IMR-90 (cell line): ENCODE measurements at regions of chr2 and their contacts with region 1.

Region 1: GRCh38 chr2:69933839-69934613 is 19.1 kb downstream of the MXD1 start:
- DNase-seq: peak; percentile 93
- ATAC-seq: peak; percentile 87
- H3K4me3 ChIP-seq: peak overlapping the region; percentile 8; the same call in 1 of the 2 replicates
- H3K27ac ChIP-seq: peak overlapping the region; percentile 74
- H3K4me1 ChIP-seq: peaks cover 11% of the 10 kb centered on the region
- H3K27me3 ChIP-seq: no peaks in the 10 kb centered on the region
- CTCF ChIP-seq: no peak
- POLR2A ChIP-seq: peak; percentile 72; the same call in 1 of the 2 replicates
- RAD21 ChIP-seq: no peak

Region 2: DNA sequence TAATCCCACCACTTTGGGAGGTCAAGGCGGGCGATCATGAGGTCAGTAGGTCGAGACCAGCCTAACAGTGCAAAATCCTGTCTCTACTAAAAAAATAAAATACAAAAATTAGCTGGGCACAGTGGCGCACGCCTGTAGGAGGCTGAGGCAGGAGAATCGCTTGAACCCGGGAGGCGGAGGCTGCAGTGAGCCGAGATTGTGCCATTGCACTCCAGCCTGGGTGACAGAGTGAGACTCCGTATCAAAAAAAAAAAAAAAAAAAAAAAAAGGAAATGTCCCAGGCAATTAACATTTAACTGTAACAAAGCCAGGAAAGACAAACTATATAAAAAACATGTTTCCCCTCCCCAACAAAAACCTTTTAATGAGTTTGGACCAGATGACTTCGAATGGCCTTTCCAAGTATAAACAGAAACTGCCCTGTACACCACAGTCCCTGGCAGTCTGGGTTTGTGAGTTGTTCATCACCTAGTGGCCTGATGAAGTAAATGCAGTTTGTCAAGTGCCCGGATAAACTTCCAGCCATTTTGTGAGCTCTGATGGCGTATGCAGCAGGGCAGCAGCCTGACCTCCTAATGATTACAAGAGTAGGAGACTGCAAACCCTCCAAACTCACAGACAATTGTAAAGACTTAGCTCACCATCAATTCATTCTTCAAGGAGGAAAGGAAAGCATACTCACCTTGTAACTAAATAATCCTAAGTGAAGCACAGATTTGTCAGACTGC is 136.7 kb after region 1 on chr2:
- CTCF ChIA-PET with region 1: interaction called, 6 read pairs
- POLR2A ChIA-PET with region 1: no interaction called
- dilution Hi-C with region 1: no loop called
- in situ Hi-C with region 1: no loop called
- intact Hi-C with region 1: loop called (anchors 5 kb)
- DNase-seq: peak; percentile 90
- ATAC-seq: peak; percentile 98
- H3K4me3 ChIP-seq: no peak overlapping the region
- H3K27ac ChIP-seq: peak overlapping the region; percentile 83; the same call in 1 of the 2 replicates
- H3K4me1 ChIP-seq: peaks cover 6% of the 10 kb centered on the region
- H3K27me3 ChIP-seq: no peaks in the 10 kb centered on the region
- CTCF ChIP-seq: peak; percentile 90
- POLR2A ChIP-seq: no peak
- RAD21 ChIP-seq: peak; percentile 91

Region 3: DNA sequence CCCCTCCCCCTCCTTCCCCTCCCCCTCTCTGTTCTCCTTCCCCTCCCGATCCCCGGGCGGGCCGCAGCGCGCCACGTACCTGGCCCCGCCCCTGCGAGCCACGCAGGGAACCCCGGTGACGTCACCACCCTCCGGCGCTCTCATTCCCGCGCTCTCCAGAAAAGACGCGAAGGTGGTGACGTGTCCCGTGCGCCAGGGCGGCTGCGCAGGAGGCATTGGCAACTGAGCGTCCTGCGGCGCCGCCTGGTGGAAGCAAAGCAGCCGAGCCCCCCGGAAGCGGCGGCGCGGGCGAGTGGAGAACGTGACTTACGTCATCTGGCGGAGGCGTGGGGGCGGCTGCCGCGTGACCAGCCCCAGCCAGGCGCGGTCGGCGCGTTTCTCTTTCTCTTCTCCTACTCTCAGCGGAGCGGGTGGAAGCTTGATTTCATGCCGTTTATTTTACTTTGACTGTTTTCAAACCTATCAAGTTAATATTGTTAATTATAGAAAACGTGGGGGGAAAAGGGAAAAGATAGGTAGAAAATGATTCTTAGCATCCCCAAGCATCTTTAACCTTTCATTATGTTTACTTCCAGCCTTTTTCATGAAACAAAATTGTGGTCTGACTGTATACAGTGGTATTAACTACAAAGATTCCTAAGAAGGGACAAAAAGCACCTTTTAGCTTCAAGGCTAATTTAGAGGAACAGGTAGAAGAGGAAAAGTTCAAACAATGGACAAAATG is 208.7 kb after region 1 on chr2:
- CTCF ChIA-PET with region 1: no interaction called
- POLR2A ChIA-PET with region 1: no interaction called
- dilution Hi-C with region 1: no loop called
- in situ Hi-C with region 1: no loop called
- intact Hi-C with region 1: loop called (anchors 5 kb)
- DNase-seq: peak; percentile 99
- ATAC-seq: peak; percentile 88
- H3K4me3 ChIP-seq: peak overlapping the region; percentile 21; the same call in 1 of the 2 replicates
- H3K27ac ChIP-seq: peak overlapping the region; percentile 77
- H3K4me1 ChIP-seq: peaks cover 12% of the 10 kb centered on the region
- H3K27me3 ChIP-seq: no peaks in the 10 kb centered on the region
- CTCF ChIP-seq: peak; percentile 99
- POLR2A ChIP-seq: peak; percentile 94
- RAD21 ChIP-seq: peak; percentile 99